SK-N-SH (cell line): ENCODE measurements at regions of chr15 and their contacts with region 1.

Region 1: GRCh38 chr15:66700802-66701421 is 1.1 kb upstream of the SMAD6 start:
- DNase-seq: peak; percentile 98
- H3K4me3 ChIP-seq: peak overlapping the region; percentile 68 to 73
- H3K27ac ChIP-seq: peak overlapping the region; percentile 89
- H3K4me1 ChIP-seq: peaks cover 23 to 24% of the 10 kb centered on the region in 2 experiments; a peak in 3 of 4 replicates
- H3K27me3 ChIP-seq: no peaks in the 10 kb centered on the region
- CTCF ChIP-seq: no peak
- EP300 ChIP-seq: peak in 1 of 2 experiments; percentile 24; a peak in 1 of 4 replicates
- RAD21 ChIP-seq: no peak

Region 2: DNA sequence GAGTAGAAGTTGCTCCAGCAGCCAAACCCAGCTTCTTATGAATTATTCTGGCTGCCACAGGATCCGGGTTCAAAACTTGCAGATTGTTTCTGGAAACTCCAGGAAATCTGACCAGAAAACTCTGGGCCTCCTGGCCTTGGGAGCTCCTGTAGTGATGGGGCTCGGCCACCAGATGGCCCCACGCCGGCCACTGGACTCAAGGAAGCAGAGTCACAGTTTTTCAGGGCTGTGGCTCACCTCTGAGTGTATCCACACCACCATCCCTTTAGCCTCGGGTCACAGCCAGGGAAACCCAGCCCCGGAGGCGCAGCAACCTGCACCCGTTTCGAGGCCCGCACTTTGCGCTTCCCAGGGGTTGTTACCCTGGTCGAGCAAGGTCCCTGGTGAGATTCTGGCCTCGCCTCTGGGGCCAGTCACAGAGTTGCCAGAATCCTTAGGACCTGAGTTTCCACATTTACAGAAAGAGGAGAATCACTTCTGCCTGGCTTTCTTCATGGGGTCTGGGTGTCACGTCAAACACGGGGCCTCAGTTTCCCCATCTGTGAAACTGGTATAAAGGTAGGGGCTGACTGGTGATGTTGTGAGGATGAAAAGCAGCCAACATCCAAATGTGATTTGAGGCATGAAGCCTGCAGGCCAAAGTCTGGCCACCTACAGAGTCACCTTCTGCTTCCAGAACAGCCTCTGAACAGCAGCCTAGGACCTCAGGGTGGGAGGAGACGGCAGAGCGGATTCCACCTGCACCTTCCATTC is 81.6 kb before region 1 on chr15:
- CTCF ChIA-PET with region 1: interaction called, 172 read pairs
- POLR2A ChIA-PET with region 1: no interaction called
- DNase-seq: peak; percentile 90
- H3K4me3 ChIP-seq: no peak overlapping the region; a peak in 1 of 4 replicates
- H3K27ac ChIP-seq: no peak overlapping the region
- H3K4me1 ChIP-seq: peaks cover 7 to 8% of the 10 kb centered on the region in 2 experiments; a peak in 2 of 4 replicates
- H3K27me3 ChIP-seq: no peaks in the 10 kb centered on the region
- CTCF ChIP-seq: peak; percentile 89
- EP300 ChIP-seq: no peak
- RAD21 ChIP-seq: peak; percentile 83

Region 3: GRCh38 chr15:66646308-66646707 is 54.6 kb before region 1 on chr15:
- CTCF ChIA-PET with region 1: interaction called, 15 read pairs
- POLR2A ChIA-PET with region 1: no interaction called
- DNase-seq: no peak
- H3K4me3 ChIP-seq: no peak overlapping the region
- H3K27ac ChIP-seq: no peak overlapping the region
- H3K4me1 ChIP-seq: peaks cover 9 to 15% of the 10 kb centered on the region in 2 experiments; a peak in 2 of 4 replicates
- H3K27me3 ChIP-seq: no peaks in the 10 kb centered on the region
- CTCF ChIP-seq: no peak
- EP300 ChIP-seq: no peak
- RAD21 ChIP-seq: no peak

Region 4: DNA sequence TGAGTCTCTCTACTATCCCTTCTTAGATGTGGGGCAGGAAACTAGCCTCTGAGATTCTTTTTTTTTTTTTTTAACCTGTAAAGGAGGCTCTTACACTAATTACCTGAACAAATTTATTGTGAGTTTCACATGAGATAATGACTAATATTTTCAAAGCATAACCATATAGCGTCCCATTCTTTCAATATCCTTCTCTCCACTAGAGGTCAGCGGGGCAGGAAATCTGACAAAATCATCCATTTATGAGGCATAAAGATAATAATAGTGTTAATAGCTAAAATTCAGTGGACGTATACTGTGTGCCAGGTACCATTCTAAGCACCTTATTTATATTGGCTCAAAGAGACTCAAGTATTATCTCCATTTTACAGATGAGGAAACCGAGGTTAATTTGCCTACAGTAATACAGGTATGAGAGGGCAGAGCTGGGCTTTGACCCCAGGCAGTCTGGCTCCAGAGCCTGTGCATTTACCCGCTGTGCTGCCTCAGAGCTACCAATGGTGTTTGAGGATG is 15.2 kb before region 1 on chr15:
- CTCF ChIA-PET with region 1: interaction called, 53 read pairs
- POLR2A ChIA-PET with region 1: no interaction called
- DNase-seq: no peak
- H3K4me3 ChIP-seq: no peak overlapping the region
- H3K27ac ChIP-seq: no peak overlapping the region
- H3K4me1 ChIP-seq: no peaks in the 10 kb centered on the region
- H3K27me3 ChIP-seq: no peaks in the 10 kb centered on the region
- CTCF ChIP-seq: peak; percentile 62
- EP300 ChIP-seq: no peak
- RAD21 ChIP-seq: peak; percentile 24